GM10248 (cell line): ENCODE measurements at regions of chr7 and their contacts with region 1.

Region 1: GRCh38 chr7:78020136-78020873 is 221.7 kb downstream of the PHTF2 start:
- DNase-seq: peak; percentile 53
- CTCF ChIP-seq: peak; percentile 57

Region 2: GRCh38 chr7:77989981-77990566 is 30.2 kb before region 1 on chr7:
- CTCF ChIA-PET with region 1: interaction called, 12 read pairs
- POLR2A ChIA-PET with region 1: no interaction called
- DNase-seq: no peak
- CTCF ChIP-seq: peak; percentile 25

Region 3: GRCh38 chr7:78033410-78033809 is 13.1 kb after region 1 on chr7:
- CTCF ChIA-PET with region 1: interaction called, 61 read pairs
- POLR2A ChIA-PET with region 1: no interaction called
- DNase-seq: no peak
- CTCF ChIP-seq: no peak

Region 4: GRCh38 chr7:78151229-78151628 is 130.9 kb after region 1 on chr7:
- CTCF ChIA-PET with region 1: no interaction called
- POLR2A ChIA-PET with region 1: no interaction called
- DNase-seq: no peak
- CTCF ChIP-seq: no peak